ENCODE measurements at regions of chr5 and their contacts with region 1.

Region 1: DNA sequence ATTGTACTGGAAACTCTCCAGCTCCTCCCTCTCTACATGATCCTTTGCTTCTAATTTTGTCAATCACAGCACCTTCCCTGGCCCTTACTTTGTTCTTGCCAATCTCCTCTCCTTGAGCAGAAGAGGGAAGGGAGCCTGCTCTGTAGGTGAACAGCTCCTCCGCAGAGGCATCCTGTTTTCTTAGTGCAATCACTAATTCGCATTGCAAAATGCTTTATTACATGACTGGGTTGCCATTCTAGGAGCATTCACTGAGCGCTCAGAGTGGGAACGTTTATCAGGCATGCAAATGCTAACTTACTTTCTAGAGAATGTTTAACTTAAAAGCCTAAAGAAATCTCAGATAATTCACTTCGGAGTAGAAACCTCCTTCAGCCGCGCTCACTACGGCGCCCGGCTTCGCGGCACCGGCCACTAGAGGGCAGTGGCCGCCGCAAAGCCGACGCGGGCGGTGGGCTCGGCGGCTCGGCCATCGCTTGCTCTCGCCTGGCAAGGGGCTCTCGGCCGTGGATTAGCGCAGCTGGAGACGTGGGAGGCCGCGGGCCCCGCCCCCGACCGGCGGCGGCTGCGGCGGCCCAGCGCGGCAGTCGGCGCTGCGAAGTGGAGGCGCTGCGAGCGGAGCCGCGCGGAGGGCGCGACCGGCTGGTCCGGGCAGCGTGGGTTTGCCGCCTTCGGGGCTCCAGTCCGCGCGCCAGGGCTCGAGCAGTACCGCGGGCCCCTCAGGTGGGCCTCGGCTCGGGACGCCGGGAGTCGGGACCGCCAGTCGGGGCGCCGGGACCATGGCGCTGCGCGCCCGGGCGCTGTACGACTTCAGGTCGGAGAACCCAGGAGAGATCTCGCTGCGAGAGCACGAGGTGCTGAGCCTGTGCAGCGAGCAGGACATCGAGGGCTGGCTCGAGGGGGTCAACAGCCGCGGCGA is at the start of gene SNX18:
- DNase-seq: peak; percentile 71 to 90
- ATAC-seq: peak; percentile 92 to 93
- H3K4me3 ChIP-seq: peak within 1 kb of the TSS; percentile 87
- H3K27ac ChIP-seq: peak within 1 kb of the TSS; percentile 79 to 98
- H3K4me1 ChIP-seq: peaks cover 8% of the 10 kb centered on the region; the same call in 1 of the 3 replicates
- CTCF ChIP-seq: peak; percentile 98
- EP300 ChIP-seq: 0 out of 5 replicates have a peak, but pooled peaks of 1 of the 2 experiments have one; percentile 17
- POLR2A ChIP-seq: peak; percentile 86
- RAD21 ChIP-seq: peak; percentile 84 to 99
- polyA plus RNA-seq, gene SNX18: 6.4 and 8.1 TPM in 2 replicates

Region 2: DNA sequence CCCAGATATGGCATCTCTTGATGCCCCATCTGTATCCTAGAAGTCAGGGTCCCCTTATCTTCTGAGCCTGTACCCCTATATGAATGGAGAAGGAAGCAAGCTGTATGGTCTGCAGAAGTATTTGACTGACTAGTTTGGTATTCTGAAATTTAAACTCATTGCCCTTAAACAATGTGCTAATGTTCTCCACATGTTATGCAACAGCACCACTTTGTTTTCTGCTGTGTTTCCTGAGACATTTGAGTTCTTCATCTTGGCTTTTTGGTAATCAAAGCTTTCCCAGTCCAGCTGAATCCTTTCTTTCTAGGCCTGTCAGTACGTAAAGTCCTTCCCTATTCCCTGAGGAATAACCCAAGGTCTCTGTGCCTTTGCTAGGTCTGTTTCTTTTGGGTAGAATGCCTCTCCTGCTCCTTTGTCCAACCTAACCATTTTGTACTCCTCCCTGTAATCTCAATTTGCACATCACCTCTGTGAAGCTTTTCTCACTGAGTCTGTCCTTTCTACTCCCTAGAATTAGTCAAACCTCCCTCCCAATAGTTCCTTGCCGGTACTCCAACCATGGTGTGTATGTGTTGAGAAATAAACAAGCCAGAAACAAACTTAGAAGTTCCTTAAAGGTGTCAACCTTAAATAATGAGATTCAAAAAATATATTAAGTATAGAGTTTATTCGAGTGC is 134.1 kb before region 1 on chr5:
- CTCF ChIA-PET with region 1: no interaction called
- POLR2A ChIA-PET with region 1: no interaction called
- DNase-seq: no peak
- ATAC-seq: no peak
- H3K4me3 ChIP-seq: no peak overlapping the region
- H3K27ac ChIP-seq: no peak overlapping the region
- H3K4me1 ChIP-seq: no peaks in the 10 kb centered on the region
- CTCF ChIP-seq: no peak
- EP300 ChIP-seq: no peak
- POLR2A ChIP-seq: no peak
- RAD21 ChIP-seq: no peak

Region 3: GRCh38 chr5:54480296-54480695 is 37.1 kb before region 1 on chr5:
- CTCF ChIA-PET with region 1: interaction called, 12 read pairs
- POLR2A ChIA-PET with region 1: no interaction called
- DNase-seq: no peak
- ATAC-seq: no peak
- H3K4me3 ChIP-seq: no peak overlapping the region
- H3K27ac ChIP-seq: no peak overlapping the region
- H3K4me1 ChIP-seq: no peaks in the 10 kb centered on the region
- CTCF ChIP-seq: no peak
- EP300 ChIP-seq: no peak
- POLR2A ChIP-seq: no peak
- RAD21 ChIP-seq: no peak

Region 4: GRCh38 chr5:54534191-54535004 is 17.0 kb after region 1 on chr5:
- CTCF ChIA-PET with region 1: interaction called, 25 read pairs
- POLR2A ChIA-PET with region 1: no interaction called
- DNase-seq: no peak
- ATAC-seq: no peak
- H3K4me3 ChIP-seq: no peak overlapping the region
- H3K27ac ChIP-seq: no peak overlapping the region
- H3K4me1 ChIP-seq: no peaks in the 10 kb centered on the region
- CTCF ChIP-seq: no peak
- EP300 ChIP-seq: no peak
- POLR2A ChIP-seq: no peak
- RAD21 ChIP-seq: no peak

Region 5: DNA sequence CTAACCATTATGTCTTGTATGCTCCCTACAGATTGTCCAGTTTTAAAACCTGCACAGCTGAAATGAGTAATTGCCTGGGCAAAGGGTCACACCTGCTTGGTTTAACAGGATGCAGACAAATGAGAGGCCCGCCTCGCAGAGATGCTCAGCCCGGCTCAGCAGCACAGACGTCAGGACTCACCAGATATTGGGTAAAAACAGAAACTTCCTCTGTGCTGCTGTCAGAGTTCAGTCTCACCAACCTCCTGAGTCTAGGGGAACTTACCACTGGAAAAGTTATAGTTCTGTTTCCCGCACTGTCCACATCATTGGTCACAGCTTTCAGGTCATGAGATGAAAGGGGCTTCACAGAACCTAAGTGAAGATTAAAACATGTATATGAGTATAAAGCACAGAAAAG is 315.4 kb after region 1 on chr5:
- CTCF ChIA-PET with region 1: interaction called, 26 read pairs
- POLR2A ChIA-PET with region 1: no interaction called
- DNase-seq: no peak
- ATAC-seq: no peak
- H3K4me3 ChIP-seq: no peak overlapping the region
- H3K27ac ChIP-seq: no peak overlapping the region
- H3K4me1 ChIP-seq: no peaks in the 10 kb centered on the region
- CTCF ChIP-seq: no peak
- EP300 ChIP-seq: no peak
- POLR2A ChIP-seq: no peak
- RAD21 ChIP-seq: no peak

Region 6: DNA sequence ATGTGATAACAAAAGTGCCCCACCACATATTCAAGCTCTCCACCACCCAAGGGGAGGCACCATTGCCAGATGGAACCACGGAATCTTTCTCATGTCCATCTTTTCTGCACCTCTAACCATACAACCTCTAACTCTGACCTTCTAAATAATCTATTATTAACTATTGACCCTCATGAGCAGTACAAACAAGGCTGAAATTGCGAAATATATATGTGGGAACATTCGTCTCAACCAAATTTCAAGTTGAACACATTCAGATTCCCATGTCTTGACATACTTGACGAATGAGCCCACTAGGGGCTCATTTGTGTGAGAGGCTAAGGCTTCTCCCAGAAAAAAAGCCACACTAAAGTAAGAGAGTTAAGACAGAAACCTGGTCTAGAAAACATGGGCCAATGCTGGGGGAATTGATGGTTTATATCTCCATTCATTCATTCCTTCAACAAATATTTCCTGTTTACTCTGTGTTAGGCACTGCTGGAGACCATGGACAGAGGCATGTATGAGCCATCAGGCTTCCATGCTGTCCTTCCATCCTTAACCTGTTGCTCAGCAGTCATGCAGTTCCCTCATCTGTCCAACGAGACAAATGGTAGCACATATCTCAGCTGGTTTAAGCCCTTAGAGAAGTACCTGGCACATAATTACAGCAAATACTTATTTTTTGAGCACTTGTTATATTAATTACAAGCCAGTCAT is 337.6 kb after region 1 on chr5:
- CTCF ChIA-PET with region 1: interaction called, 18 read pairs
- POLR2A ChIA-PET with region 1: no interaction called
- DNase-seq: no peak
- ATAC-seq: no peak
- H3K4me3 ChIP-seq: no peak overlapping the region
- H3K27ac ChIP-seq: no peak overlapping the region
- H3K4me1 ChIP-seq: no peaks in the 10 kb centered on the region
- CTCF ChIP-seq: no peak
- EP300 ChIP-seq: no peak
- POLR2A ChIP-seq: no peak
- RAD21 ChIP-seq: no peak

Region 7: GRCh38 chr5:54874373-54874921 is 357.0 kb after region 1 on chr5:
- CTCF ChIA-PET with region 1: interaction called, 23 read pairs
- POLR2A ChIA-PET with region 1: no interaction called
- DNase-seq: no peak
- ATAC-seq: no peak
- H3K4me3 ChIP-seq: no peak overlapping the region
- H3K27ac ChIP-seq: no peak overlapping the region
- H3K4me1 ChIP-seq: no peaks in the 10 kb centered on the region
- CTCF ChIP-seq: no peak
- EP300 ChIP-seq: no peak
- POLR2A ChIP-seq: no peak
- RAD21 ChIP-seq: no peak

Region 8: GRCh38 chr5:54895816-54896341 is 378.4 kb after region 1 on chr5:
- CTCF ChIA-PET with region 1: interaction called, 36 read pairs
- POLR2A ChIA-PET with region 1: no interaction called
- DNase-seq: peak; percentile 14 to 49
- ATAC-seq: peak; percentile 85 to 89
- H3K4me3 ChIP-seq: no peak overlapping the region
- H3K27ac ChIP-seq: no peak overlapping the region
- H3K4me1 ChIP-seq: no peaks in the 10 kb centered on the region
- CTCF ChIP-seq: peak; percentile 52
- EP300 ChIP-seq: no peak
- POLR2A ChIP-seq: no peak
- RAD21 ChIP-seq: peak; percentile 55 to 62; a peak in 4 of 5 replicates

Measured in A549 (cell line).